ENCODE measurements at regions of chr10 and their contacts with region 1.

Region 1: DNA sequence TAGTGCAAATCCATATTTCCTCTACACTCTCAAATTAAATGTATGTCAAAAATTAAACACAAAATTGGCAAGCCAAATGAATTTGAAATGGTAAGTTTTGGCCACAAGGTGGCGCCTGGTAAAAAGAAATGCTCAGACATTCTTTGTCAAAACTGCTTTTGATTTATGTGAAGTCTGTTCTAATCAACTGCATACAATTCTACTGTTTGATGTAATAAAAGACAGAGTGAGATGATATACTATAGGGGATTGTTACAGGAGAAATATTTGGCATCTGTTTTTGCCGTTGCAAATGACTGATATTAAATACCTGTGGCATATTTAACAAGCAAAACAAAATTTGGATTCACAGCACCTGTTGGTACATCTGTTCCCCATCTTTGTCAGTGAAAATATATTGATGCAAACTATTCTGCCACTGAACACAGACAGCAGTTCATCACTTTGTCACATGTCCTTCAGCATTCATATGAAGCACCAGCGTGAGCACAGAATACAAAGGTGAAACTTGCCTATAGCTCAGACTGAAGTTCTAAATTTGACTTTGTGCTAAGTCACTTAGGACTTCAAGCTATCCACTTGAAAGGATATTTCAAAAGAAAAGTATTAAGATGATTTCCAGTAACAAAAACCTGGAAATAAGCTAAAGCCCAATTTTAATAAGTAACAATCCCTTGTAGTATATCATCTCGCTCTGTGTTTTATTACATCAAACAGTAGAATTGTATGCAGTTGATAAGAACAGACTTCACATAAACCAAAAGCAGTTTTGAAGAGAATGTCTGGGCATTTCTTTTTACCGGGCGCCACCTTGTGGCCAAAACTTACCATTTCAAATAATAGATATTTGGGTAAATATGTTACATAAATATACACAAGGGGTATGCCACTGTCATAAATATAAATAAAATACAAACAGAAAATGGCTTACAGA is 10.2 kb upstream of the CH25H start:
- DNase-seq: peak; percentile 42 to 68 (median 47)
- H3K4me3 ChIP-seq: no peak overlapping the region
- H3K4me3 Mint-ChIP-seq: no peak overlapping the region
- H3K27ac ChIP-seq: no peak overlapping the region
- H3K27ac Mint-ChIP-seq: peak overlapping the region in 4 of 8 donors; percentile 6 to 82 (median 41)
- H3K4me1 ChIP-seq: peaks cover 6% of the 10 kb centered on the region
- H3K4me1 Mint-ChIP-seq: peaks cover 8 to 17% (median 14%) of the 10 kb centered on the region in 3 donors
- H3K27me3 ChIP-seq: no peaks in the 10 kb centered on the region
- H3K27me3 Mint-ChIP-seq: peaks cover 0 to 2% of the 10 kb centered on the region in 2 donors

Region 2: DNA sequence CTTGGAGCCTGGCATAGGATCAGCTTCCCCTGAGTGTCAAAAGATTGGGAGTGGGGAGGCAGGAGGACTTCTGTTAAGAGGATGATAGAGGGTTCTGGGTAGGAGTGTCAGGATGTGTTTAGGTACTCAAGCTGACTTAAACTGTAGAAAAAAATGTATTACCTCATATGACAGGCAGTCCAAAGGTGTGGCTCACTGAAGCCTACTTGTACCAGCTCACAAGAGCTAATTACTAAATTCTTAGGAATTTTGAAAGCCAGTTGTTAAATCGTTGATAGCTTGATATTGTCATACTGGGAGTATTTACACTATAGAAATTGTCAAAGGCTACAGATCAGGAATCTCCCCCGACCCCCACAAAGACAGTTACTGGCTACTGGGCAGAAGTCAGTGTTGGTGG is 194.6 kb before region 1 on chr10:
- CTCF ChIA-PET with region 1: interaction called, 10 read pairs
- POLR2A ChIA-PET with region 1: no interaction called
- DNase-seq: no peak
- H3K4me3 ChIP-seq: no peak overlapping the region
- H3K4me3 Mint-ChIP-seq: no peak overlapping the region
- H3K27ac ChIP-seq: no peak overlapping the region
- H3K27ac Mint-ChIP-seq: peak overlapping the region in 4 of 8 donors; percentile 1 to 80 (median 38)
- H3K4me1 ChIP-seq: no peaks in the 10 kb centered on the region
- H3K4me1 Mint-ChIP-seq: peaks cover 0 to 1% (median 0%) of the 10 kb centered on the region in 3 donors
- H3K27me3 ChIP-seq: no peaks in the 10 kb centered on the region
- H3K27me3 Mint-ChIP-seq: no peaks in the 10 kb centered on the region

Region 3: DNA sequence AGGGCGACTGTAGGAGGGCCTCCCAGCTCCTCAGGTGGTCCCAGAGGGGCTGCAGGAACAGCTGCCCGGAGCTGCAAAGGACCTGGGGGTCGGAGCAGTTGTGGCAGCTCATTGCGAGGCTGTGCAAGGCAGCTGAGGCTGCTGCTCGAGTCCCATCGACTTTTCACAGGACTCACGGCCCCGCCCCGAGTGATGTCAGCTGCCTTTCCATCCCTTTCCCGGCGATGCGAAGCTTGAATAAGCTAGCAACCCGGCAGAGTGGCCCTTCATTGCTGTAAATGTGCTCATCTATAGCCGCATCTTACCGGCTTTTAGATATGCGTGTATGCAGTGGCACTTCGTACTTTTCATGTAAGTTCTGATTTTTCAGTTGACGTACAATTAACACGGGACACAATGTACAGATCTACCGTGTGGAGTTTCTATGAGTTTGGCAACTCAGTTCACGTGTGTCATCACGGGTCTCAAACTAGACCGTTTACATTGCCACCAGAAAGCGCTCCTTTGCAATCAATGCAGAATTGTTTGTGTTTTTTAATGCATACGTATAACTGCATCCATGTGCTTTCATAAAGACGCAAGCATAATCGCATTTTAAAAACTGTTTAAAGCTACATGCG is 10.0 kb before region 1 on chr10 and contains the start of gene CH25H:
- CTCF ChIA-PET with region 1: interaction called, 34 read pairs
- POLR2A ChIA-PET with region 1: interaction called, 3 read pairs
- DNase-seq: peak; percentile 20 to 53 (median 31)
- H3K4me3 ChIP-seq: peak within 1 kb of the TSS; percentile 66
- H3K4me3 Mint-ChIP-seq: peak within 1 kb of the TSS; percentile 79 to 91 (median 83)
- H3K27ac ChIP-seq: no peak within 1 kb of the TSS
- H3K27ac Mint-ChIP-seq: peak within 1 kb of the TSS in 5 of 8 donors; percentile 54 to 89 (median 77)
- H3K4me1 ChIP-seq: peaks cover 19% of the 10 kb centered on the region
- H3K4me1 Mint-ChIP-seq: peaks cover 10 to 15% (median 15%) of the 10 kb centered on the region in 3 donors
- H3K27me3 ChIP-seq: peaks cover 19% of the 10 kb centered on the region
- H3K27me3 Mint-ChIP-seq: peaks cover 19 to 48% of the 10 kb centered on the region in 2 donors
- total RNA-seq, gene CH25H: not detected